MCF 10A (cell line): ENCODE measurements at regions of chr19 and their contacts with region 1.

Region 1: DNA sequence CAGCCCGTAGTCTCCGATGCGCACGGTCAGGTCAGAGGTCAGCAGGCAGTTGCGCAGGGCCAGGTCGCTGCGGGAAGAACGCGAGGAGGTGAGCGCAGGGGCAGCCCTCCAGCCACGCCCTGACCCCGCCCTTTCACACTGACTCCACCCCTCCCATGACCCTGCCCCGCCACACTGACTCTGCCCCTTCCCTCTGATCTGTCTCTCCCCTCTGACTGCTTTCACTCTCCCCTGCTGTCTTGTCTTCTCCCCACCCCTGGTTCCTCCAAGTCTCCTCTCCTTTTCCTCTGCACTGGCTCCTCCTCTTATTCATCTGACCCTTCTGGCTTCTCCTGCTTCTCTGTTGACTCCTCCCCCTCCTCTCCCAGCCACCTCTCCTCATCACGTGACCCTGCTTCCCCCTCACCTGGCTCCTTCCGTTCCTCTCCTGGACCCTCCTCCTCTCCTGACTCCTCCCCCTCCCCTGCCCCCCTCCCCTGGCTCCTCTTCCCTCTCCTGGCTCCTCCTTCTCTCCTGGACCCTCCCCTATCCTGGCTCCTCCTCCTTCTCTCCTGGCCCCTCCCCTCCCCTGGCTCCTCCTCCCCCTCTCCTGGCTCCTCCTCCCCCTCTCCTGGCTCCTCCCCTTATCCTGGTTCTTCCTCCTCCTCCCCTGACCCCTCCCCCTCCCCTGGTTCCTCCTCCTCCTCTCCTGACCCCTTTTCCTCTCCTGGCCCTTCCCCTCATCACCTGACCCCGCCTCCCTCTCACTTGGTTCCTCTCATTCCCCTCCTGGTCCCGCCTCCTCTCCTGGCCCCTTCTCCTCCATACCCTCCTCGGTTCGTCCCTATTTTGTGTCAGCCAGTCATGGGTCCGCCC is 9.9 kb downstream of the LMTK3 start:
- DNase-seq: peak; percentile 97
- H3K4me3 Mint-ChIP-seq: peak overlapping the region; percentile 74
- H3K27ac Mint-ChIP-seq: peak overlapping the region; percentile 70
- H3K4me1 Mint-ChIP-seq: peaks cover 15% of the 10 kb centered on the region
- H3K27me3 Mint-ChIP-seq: peaks cover 16% of the 10 kb centered on the region
- CTCF ChIP-seq: no peak

Region 2: DNA sequence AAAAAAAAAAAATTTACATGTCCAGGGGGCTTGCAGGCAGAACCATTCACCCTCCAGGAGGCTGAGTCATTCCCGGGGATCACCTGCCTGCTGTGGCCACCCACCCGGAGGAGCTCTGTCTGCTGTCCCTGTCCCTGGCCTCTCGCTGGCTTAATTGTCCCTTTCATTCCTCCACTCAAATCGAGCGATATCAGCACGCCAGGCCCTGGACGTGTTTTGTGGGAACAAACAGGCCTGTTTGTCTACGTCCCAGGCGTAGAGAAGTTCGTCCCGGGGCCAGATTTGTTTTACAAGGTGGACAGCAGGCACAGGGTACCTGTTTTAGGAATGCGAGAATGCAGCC is 71.4 kb after region 1 on chr19:
- CTCF ChIA-PET with region 1: interaction called, 10 read pairs
- POLR2A ChIA-PET with region 1: no interaction called
- intact Hi-C with region 1: no loop called
- DNase-seq: no peak
- H3K4me3 Mint-ChIP-seq: no peak overlapping the region
- H3K27ac Mint-ChIP-seq: no peak overlapping the region
- H3K4me1 Mint-ChIP-seq: peaks cover 14% of the 10 kb centered on the region
- H3K27me3 Mint-ChIP-seq: no peaks in the 10 kb centered on the region
- CTCF ChIP-seq: no peak

Region 3: DNA sequence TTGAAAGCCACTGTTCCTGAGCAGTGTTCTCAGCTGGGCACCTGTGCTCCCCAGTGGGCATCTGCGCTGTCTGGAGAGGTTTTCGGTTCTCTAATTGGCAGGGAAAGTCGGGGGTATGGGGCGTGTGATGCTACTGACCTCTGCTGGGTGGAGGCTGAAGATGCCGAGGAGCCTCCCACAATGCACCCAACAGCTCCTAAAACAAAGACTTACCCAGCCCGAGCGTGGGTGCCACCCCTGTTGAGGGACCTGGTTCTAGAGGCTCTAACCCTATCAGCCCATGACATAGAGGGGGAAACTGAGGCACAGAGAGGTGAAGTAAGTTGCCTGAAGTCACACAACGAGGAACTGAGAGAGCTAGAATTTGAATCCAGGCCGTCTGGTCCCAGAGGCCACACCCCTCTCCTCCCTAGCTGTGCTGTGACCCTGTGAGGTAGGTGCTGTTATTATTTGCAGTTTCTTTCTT is 107.1 kb after region 1 on chr19:
- CTCF ChIA-PET with region 1: interaction called, 14 read pairs
- POLR2A ChIA-PET with region 1: no interaction called
- intact Hi-C with region 1: loop called (anchors 1 kb)
- DNase-seq: peak; percentile 79
- H3K4me3 Mint-ChIP-seq: no peak overlapping the region
- H3K27ac Mint-ChIP-seq: no peak overlapping the region
- H3K4me1 Mint-ChIP-seq: peaks cover 5% of the 10 kb centered on the region
- H3K27me3 Mint-ChIP-seq: no peaks in the 10 kb centered on the region
- CTCF ChIP-seq: peak; percentile 66